Vagina (tissue), 2 donors: ENCODE measurements at regions of chr2 and their contacts with region 1.

Region 1: DNA sequence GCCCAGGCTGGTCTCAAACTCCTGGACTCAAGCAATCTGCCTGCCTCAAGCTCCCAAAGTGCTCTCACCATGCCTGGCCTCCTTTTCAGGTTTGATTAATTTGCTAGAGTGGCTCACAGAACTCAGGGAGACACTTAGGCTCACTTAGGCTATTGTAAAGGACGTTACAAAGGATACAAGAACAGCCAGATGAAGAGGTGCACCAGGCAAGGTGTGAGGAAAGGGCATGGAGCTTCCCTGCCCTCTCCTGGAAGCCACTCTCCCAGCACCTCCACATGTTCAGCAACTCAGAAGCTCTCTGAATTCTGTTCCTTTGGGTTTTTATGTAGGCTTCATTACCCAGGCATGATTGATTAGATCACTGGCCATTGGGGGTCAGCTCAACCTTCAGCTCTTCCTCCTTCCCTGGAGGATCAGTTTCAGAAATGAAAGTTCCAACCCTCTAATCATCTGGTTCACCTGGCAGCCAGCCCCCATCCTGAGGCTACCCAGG is 78.7 kb upstream of the RGPD5 start:
- DNase-seq: peak; percentile 56 to 72
- H3K4me3 ChIP-seq: no peak overlapping the region
- H3K27ac ChIP-seq: no peak overlapping the region
- H3K4me1 ChIP-seq: peaks cover 10% of the 10 kb centered on the region
- H3K27me3 ChIP-seq: no peaks in the 10 kb centered on the region
- CTCF ChIP-seq: peak in 1 of 3 experiments; percentile 34
- POLR2A ChIP-seq: no peak

Region 2: GRCh38 chr2:109102588-109103233 is 612.6 kb before region 1 on chr2:
- intact Hi-C with region 1: loop called (anchors 10 kb)
- DNase-seq: no peak
- H3K4me3 ChIP-seq: no peak overlapping the region
- H3K27ac ChIP-seq: no peak overlapping the region
- H3K4me1 ChIP-seq: no peaks in the 10 kb centered on the region
- H3K27me3 ChIP-seq: no peaks in the 10 kb centered on the region
- CTCF ChIP-seq: no peak
- POLR2A ChIP-seq: no peak

Region 3: GRCh38 chr2:109529532-109530449 is 185.6 kb before region 1 on chr2:
- intact Hi-C with region 1: no loop called
- DNase-seq: peak in 1 of 2 donors; percentile 82
- H3K4me3 ChIP-seq: no peak overlapping the region
- H3K27ac ChIP-seq: no peak overlapping the region
- H3K4me1 ChIP-seq: peaks cover 7% of the 10 kb centered on the region
- H3K27me3 ChIP-seq: no peaks in the 10 kb centered on the region
- CTCF ChIP-seq: no peak
- POLR2A ChIP-seq: no peak